Body of pancreas (tissue), 4 donors: ENCODE measurements at regions of chr4 and their contacts with region 1.

Region 1: DNA sequence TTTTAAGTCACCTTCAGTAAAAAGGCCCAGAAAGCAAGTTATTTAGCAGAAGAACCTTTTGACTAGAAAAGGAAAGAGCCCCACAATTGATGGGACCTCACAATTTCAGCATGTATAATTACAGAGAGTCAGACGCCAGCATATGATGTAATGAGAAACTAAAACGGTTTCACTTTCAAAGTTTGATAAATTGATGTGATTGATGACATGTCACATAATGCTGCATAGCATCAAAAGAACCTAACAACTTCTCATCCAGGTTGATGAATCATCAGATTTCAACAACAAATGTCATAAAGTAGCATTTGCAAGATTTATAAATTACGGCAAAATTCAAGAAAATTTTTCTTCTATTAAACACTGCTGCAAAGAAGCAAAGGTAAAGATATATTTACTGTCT is 3.9 kb upstream of the GAR1 start:
- DNase-seq: no peak
- ATAC-seq: no peak
- H3K4me3 ChIP-seq: no peak overlapping the region
- H3K27ac ChIP-seq: no peak overlapping the region
- H3K4me1 ChIP-seq: peaks cover 11% of the 10 kb centered on the region
- H3K27me3 ChIP-seq: no peaks in the 10 kb centered on the region
- CTCF ChIP-seq: no peak
- POLR2A ChIP-seq: no peak

Region 2: GRCh38 chr4:109729718-109730618 is 81.7 kb before region 1 on chr4 and contains the start of gene PLA2G12A:
- intact Hi-C with region 1: loop called (anchors 5 kb)
- DNase-seq: peak; percentile 95 to 97 (median 96)
- ATAC-seq: peak; percentile 93
- H3K4me3 ChIP-seq: peak within 1 kb of the TSS; percentile 72 to 90
- H3K27ac ChIP-seq: peak within 1 kb of the TSS; percentile 91 to 97 (median 96)
- H3K4me1 ChIP-seq: peaks cover 38% of the 10 kb centered on the region
- H3K27me3 ChIP-seq: no peaks in the 10 kb centered on the region
- CTCF ChIP-seq: no peak
- POLR2A ChIP-seq: peak; percentile 77 to 87 (median 82)
- total RNA-seq, gene PLA2G12A: 17.1 to 18.5 TPM